Activated CD4-positive, alpha-beta T cell treated with anti-CD3 and anti-CD28 coated beads for 36 hours (primary cell): ENCODE measurements at regions of chr19 and their contacts with region 1.

Region 1: DNA sequence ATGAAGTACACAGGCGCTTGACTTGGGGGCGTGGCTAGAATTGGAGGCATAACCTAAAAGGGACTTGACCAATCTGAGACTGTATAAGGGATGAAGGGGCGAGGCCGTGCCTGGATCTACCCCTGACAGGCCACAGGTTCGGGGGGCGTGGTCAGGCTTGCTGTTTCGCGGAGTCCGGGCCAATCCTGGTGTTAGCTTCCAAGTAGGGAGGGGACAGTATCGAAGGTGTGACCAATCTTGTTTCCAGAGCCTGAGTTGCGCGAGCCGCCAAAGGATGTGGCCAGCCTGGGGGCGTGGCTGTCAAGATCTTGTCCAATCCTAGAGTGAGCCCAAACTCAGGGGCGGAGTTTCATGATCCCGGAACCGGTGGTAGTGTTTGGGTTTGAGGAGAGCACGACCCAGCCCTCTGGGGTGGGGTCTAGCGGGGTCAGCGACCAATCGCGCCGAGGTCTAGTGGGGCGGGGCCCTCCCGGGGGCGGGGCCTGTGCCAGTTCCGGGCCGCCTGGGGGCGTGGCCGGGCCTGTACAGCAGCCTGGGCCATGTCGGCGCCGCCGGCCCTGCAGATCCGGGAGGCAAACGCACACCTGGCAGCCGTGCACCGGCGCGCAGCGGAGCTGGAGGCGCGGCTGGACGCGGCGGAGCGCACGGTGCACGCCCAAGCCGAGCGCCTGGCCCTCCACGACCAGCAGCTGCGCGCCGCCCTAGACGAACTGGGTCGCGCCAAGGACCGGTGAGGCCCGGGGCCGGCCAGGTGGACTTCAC is at the start of gene VMAC:
- DNase-seq: peak; percentile 100
- ATAC-seq: peak; percentile 87
- H3K4me3 Mint-ChIP-seq: peak within 1 kb of the TSS; percentile 94
- H3K27ac Mint-ChIP-seq: peak within 1 kb of the TSS; percentile 98
- H3K4me1 Mint-ChIP-seq: peaks cover 32% of the 10 kb centered on the region
- H3K27me3 Mint-ChIP-seq: no peaks in the 10 kb centered on the region
- total RNA-seq, gene VMAC: 2.3 to 2.8 TPM

Region 2: GRCh38 chr19:4246767-4247593 is 1657.6 kb before region 1 on chr19 and contains the start of gene YJU2:
- CTCF ChIA-PET with region 1: no interaction called
- POLR2A ChIA-PET with region 1: no interaction called
- intact Hi-C with region 1: loop called in 1 of 2 experiments (anchors 2 kb)
- DNase-seq: peak; percentile 100
- ATAC-seq: peak; percentile 97
- H3K4me3 Mint-ChIP-seq: peak within 1 kb of the TSS; percentile 84
- H3K27ac Mint-ChIP-seq: peak within 1 kb of the TSS; percentile 100
- H3K4me1 Mint-ChIP-seq: peaks cover 9% of the 10 kb centered on the region
- H3K27me3 Mint-ChIP-seq: no peaks in the 10 kb centered on the region
- total RNA-seq, gene YJU2: 29.8 to 34.8 TPM

Region 3: DNA sequence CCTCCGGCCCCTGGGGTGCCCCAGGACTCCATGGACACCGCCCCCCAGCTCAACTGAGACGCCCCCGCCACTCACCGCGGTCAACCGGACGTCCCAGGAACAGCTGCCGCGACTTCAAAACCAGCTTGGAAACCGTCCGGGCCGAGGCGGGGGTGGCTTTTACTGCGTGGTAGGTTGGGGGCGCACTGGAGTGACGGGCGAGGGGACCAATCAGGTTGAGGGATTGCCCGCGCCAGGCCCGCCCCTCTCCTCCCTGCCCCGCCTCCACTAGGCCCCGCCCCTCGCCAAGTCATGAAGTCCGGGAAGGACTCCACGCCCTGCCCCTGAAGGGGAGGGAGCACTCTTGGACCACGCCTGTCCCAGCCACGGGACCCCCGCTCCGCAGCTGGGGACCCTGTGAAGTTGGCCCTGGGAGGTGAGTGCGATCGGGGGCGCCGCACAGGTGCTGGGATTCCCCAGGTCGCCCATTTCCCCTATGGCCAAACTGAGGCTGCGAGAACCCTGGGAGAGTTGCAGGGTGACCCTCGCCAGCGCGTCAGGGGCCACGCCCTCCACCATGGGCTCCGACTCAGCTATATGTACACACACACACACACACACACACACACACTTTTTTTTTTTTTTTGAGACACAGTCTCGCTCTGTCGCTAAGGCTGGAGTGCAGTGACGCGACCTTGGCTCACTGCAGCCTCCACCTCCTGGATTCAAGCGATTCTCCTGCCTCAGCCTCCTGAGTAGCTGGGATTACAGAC is 1036.8 kb before region 1 on chr19 and contains the start of gene PLIN3:
- CTCF ChIA-PET with region 1: no interaction called
- POLR2A ChIA-PET with region 1: no interaction called
- intact Hi-C with region 1: loop called in 1 of 2 experiments (anchors 2 kb)
- DNase-seq: peak; percentile 98
- ATAC-seq: peak; percentile 95
- H3K4me3 Mint-ChIP-seq: peak within 1 kb of the TSS; percentile 73
- H3K27ac Mint-ChIP-seq: peak within 1 kb of the TSS; percentile 63
- H3K4me1 Mint-ChIP-seq: peaks cover 20% of the 10 kb centered on the region
- H3K27me3 Mint-ChIP-seq: peaks cover 2% of the 10 kb centered on the region
- total RNA-seq, gene PLIN3: 26.9 to 27.5 TPM

Region 4: GRCh38 chr19:5719961-5720790 is 184.4 kb before region 1 on chr19 and contains the starts of genes CATSPERD and LONP1:
- CTCF ChIA-PET with region 1: interaction called, 5 read pairs
- POLR2A ChIA-PET with region 1: no interaction called
- intact Hi-C with region 1: loop called (anchors 1 to 2 kb)
- DNase-seq: peak; percentile 99
- ATAC-seq: peak; percentile 84
- H3K4me3 Mint-ChIP-seq: peak within 1 kb of the TSS; percentile 98
- H3K27ac Mint-ChIP-seq: peak within 1 kb of the TSS; percentile 99
- H3K4me1 Mint-ChIP-seq: peaks cover 27% of the 10 kb centered on the region
- H3K27me3 Mint-ChIP-seq: no peaks in the 10 kb centered on the region
- total RNA-seq, gene CATSPERD: not detected
- total RNA-seq, gene LONP1: 287 to 315 TPM

Region 5: GRCh38 chr19:5811117-5811516 is 93.4 kb before region 1 on chr19:
- CTCF ChIA-PET with region 1: no interaction called
- POLR2A ChIA-PET with region 1: no interaction called
- intact Hi-C with region 1: no loop called
- DNase-seq: no peak
- ATAC-seq: no peak
- H3K4me3 Mint-ChIP-seq: no peak overlapping the region
- H3K27ac Mint-ChIP-seq: no peak overlapping the region
- H3K4me1 Mint-ChIP-seq: no peaks in the 10 kb centered on the region
- H3K27me3 Mint-ChIP-seq: no peaks in the 10 kb centered on the region

Region 6: DNA sequence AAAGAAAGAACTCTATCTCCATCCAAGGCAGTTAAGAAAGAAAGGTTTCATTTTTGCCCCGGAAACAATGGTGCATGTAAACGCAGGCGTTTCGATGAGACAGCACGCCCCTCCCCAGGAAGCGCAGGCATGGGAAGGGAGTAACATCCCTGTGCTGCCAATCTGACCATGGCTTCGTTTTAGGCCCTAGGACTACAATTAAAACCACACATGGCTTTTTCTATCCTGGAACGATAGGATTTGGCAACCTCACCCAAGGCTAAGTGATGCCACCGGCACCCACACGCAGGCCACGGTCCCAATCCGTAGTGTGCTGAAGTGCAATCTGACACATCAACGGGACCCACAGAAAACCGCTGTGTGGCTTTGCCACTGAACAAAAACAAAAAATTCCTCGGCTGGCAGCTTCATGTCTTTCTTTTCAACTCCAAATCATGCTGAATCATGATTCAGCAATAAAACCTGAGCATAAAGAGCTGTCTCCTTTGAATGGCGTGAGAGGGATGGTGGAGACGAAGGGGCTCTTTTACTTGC is 49.2 kb after region 1 on chr19:
- CTCF ChIA-PET with region 1: interaction called, 5 read pairs
- POLR2A ChIA-PET with region 1: interaction called, 4 read pairs
- intact Hi-C with region 1: loop called (anchors 2 to 5 kb)
- DNase-seq: peak; percentile 72
- ATAC-seq: peak; percentile 35
- H3K4me3 Mint-ChIP-seq: peak overlapping the region; percentile 53
- H3K27ac Mint-ChIP-seq: peak overlapping the region; percentile 98
- H3K4me1 Mint-ChIP-seq: peaks cover 93% of the 10 kb centered on the region
- H3K27me3 Mint-ChIP-seq: no peaks in the 10 kb centered on the region

Region 7: DNA sequence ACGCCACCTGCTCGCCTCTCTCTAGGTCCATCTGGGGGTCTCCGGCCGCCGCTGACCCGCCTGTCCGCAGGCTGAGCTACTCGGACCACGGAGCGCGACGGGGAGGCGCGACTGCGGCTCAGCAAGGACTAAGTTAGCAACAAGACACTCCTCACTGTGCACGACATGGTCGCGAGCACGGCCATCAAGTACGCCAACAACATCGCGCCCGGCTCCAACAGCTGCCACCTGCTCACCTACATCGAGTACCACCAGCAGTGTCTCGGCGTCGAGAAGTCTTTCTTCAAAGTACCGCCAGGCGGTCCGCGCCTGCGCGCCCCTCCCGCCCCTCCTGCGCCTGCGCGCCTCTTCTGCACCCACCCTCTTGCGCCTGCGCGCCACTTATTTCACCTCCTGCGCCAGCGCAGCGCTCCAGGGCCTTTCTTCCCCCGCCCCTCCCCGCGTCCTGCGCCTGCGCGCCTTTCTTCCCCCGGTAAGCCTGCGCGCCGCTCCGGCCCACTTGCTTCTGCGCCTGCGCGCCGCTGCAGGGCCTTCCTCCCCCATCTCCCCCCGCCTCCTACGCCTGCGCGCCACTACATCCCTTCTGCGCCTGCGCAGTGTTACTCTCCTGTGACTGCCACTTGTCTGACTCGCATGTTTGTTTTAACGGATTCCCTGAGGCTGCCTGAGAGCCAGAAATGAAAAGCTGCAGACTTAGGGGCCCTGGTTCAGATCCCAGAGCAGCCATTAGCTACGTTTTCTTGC is 294.9 kb after region 1 on chr19:
- CTCF ChIA-PET with region 1: no interaction called
- POLR2A ChIA-PET with region 1: no interaction called
- intact Hi-C with region 1: loop called in 1 of 2 experiments (anchors 1 kb)
- DNase-seq: peak; percentile 100
- ATAC-seq: peak; percentile 95
- H3K4me3 Mint-ChIP-seq: peak overlapping the region; percentile 100
- H3K27ac Mint-ChIP-seq: peak overlapping the region; percentile 92
- H3K4me1 Mint-ChIP-seq: peaks cover 12% of the 10 kb centered on the region
- H3K27me3 Mint-ChIP-seq: no peaks in the 10 kb centered on the region

Region 8: DNA sequence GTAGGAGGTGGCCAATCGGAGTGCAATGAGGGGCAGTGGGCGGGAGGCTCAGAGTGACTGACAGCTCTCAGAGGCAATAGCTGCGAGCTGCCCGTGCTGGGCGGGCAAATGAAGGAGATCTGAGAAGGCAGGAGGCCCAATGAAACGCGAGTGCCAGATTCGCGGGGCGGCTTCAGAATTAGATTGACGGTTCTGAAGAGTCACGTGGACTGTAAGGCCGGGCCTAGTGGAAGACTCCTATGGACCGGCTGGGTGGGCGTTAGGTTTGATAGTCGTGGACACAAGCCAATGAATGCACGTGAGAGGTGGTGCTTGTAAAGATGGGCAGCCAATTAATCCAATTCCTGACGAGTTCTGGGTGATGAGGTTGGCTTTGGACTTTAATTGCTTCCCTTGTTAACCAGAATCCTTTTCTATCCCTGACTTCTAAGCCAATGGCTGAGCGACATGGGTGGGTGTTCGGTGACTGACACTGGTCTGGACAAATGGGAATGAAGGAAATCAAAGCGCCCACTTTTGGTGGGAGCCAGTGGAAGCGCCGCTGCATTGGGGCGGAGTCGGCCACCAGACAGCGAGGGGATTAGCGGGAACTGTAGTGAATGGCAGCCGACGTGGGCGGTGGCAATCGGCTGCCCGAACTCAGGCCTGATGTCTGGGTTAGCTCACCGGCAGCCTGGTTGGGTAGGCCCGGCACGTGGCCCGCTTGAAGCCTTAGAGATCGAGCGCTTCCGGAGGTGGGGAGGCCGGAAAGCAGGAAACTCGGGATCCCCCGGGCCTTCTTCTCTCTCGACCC is 520.6 kb after region 1 on chr19:
- CTCF ChIA-PET with region 1: no interaction called
- POLR2A ChIA-PET with region 1: no interaction called
- intact Hi-C with region 1: loop called in 1 of 2 experiments (anchors 1 kb)
- DNase-seq: peak; percentile 100
- ATAC-seq: peak; percentile 88
- H3K4me3 Mint-ChIP-seq: peak overlapping the region; percentile 73
- H3K27ac Mint-ChIP-seq: peak overlapping the region; percentile 98
- H3K4me1 Mint-ChIP-seq: peaks cover 31% of the 10 kb centered on the region
- H3K27me3 Mint-ChIP-seq: no peaks in the 10 kb centered on the region